Mammary epithelial cell (primary cell): ENCODE measurements at regions of chr4 and their contacts with region 1.

Region 1: DNA sequence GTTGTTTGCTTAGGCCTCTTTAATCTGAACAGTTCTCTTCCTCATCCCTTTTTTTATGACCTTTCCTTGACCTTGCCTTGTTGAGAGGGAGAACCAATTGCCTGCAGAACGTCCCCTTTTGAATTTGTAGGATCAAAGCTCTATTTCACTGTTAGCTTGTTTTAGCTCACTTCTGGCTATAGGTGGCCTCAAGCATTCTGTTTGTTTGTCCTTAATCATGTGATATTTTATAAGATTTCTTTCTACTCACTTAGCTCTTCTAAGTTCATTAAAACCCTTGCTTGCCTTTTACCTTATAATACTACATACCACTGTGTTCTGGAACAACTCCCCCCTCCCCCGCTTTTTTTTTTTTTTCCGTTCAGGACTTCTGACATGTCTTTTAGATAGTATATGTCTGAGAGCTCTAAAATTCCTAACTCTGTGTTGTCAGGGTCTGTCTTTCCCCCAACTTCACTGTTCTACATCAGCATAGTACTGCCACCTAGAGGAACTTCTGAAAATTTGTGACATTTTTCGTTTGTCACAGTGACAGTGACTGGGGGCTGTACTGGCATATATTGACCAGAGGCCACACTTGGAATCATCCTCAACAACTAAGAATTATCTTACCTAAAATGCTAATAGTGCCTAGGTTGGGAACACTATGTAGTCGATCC is 128.5 kb downstream of the LARP7 start:
- DNase-seq: no peak
- H3K4me3 ChIP-seq: no peak overlapping the region
- H3K27ac ChIP-seq: no peak overlapping the region
- H3K4me1 ChIP-seq: no peaks in the 10 kb centered on the region
- H3K27me3 ChIP-seq: peaks cover 2% of the 10 kb centered on the region
- CTCF ChIP-seq: peak; percentile 28 to 47

Region 2: DNA sequence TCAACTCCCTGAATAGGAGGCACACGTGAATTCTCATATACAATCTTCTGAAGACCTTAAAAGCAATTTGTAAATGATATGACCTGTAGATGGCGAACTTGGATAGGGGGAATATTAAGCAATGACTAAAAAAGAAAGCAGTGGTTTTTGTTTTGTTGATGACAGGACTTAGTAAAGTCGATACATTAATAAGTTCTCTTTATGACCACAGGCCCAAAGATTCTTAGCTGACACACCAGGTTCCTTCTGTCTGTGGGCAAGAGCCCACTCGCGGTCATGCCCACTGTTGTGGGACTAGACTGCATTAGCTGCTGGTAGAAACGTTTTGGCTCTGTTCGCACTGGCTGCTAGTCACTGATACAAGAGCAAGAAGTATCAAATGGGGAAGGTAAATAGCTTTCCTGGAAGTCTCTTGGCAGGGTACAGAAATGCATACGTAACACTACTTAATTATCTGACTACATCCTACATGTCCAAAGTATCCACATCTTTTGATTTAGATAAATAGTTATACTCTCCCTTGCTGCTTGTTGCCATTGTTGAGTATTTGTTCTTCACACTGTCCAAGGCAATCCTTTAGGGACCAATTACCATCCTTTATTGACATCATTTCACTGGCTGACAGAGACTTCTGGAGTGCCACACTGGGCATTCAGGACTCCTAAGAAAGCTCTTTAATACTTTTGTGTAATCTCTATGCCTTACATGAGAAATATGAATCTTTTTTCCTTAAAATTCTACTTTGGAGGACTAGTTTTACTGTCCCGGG is 437.3 kb before region 1 on chr4:
- CTCF ChIA-PET with region 1: no interaction called
- dilution Hi-C with region 1: no loop called
- in situ Hi-C with region 1: loop called in 1 of 2 experiments (anchors 25 kb)
- intact Hi-C with region 1: no loop called
- DNase-seq: peak; percentile 45
- H3K4me3 ChIP-seq: no peak overlapping the region
- H3K27ac ChIP-seq: no peak overlapping the region
- H3K4me1 ChIP-seq: no peaks in the 10 kb centered on the region
- H3K27me3 ChIP-seq: no peaks in the 10 kb centered on the region
- CTCF ChIP-seq: peak; percentile 45 to 54

Region 3: DNA sequence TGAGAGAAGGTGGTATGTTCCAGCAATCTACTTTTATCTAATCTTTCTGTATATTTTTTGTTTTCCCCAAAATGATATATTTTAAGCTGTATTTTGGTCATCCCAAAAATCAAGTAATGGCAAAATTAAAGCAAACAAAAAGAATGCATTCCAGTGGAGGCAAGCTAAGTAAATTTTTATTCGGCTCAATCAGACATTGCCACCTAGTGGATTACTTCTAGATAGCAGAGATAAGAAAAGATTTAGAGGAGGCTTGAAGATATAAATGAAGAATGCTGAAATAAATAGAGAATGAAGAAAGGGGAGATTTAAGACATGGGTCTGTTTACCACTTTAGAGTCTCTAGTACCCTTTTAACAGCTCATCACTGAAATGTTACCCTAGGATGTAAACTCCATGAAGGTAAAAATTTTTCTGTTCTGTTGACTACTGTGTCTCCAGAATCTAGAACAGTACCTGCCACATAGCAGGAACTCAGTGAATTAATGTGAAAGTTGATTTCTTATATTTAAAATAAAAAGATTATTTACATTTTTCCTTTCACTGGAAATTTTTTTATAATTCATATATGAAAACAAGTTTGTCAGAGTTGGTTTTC is 173.1 kb after region 1 on chr4:
- CTCF ChIA-PET with region 1: interaction called, 3 read pairs
- dilution Hi-C with region 1: no loop called
- in situ Hi-C with region 1: loop called (anchors 10 kb)
- intact Hi-C with region 1: loop called (anchors 1 kb)
- DNase-seq: peak; percentile 31
- H3K4me3 ChIP-seq: no peak overlapping the region
- H3K27ac ChIP-seq: no peak overlapping the region
- H3K4me1 ChIP-seq: no peaks in the 10 kb centered on the region
- H3K27me3 ChIP-seq: no peaks in the 10 kb centered on the region
- CTCF ChIP-seq: peak; percentile 77 to 78

Region 4: DNA sequence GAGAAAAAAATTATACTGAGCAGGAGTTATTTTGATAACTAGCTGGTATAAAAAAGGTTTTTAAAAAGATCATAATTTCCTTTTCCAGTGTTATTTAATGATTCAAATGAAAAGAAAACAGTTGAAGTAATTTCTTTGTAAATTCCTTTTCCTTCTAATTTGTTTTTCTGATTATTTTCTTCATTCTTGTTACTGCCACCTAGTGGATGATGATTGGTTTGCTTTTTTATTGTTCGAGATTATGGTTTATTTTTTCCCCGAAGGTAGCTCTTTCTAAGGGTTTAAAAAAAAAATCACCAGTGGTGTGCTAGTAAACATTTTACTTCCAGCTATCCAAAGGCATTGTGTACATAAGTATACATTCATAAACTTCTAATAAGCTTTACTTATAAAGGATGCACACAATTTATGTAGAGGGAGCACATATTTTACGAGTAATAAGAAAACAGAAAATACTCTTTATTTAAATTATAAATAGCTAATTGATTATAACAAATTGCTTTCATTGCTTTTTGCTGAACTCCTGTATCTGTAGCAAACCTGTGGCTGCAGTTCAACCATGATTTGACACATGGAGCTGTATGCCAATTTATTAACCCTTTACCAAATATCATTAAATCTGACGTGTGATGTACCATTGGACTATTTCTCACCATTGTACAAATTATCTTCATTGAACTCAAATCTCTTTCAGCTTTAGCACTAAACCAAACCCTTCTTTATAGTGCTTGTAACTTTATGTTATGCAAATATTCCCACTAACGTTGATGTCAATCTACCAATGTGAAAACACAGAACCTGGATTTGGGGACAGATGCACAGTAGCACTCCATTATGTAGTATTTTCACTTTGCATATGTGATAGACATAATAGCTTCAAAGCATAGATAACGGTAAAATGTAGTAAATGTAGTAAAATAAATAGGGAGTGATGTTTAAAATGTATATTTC is 186.2 kb after region 1 on chr4:
- CTCF ChIA-PET with region 1: interaction called, 16 read pairs
- dilution Hi-C with region 1: no loop called
- in situ Hi-C with region 1: no loop called
- intact Hi-C with region 1: no loop called
- DNase-seq: no peak
- H3K4me3 ChIP-seq: no peak overlapping the region
- H3K27ac ChIP-seq: no peak overlapping the region
- H3K4me1 ChIP-seq: no peaks in the 10 kb centered on the region
- H3K27me3 ChIP-seq: peaks cover 2% of the 10 kb centered on the region
- CTCF ChIP-seq: peak; percentile 42 to 57